Endothelial cell of umbilical vein (primary cell): ENCODE measurements at regions of chr4 and their contacts with region 1.

Region 1: GRCh38 chr4:165096776-165097175 is 15.9 kb downstream of the TMEM192 start:
- DNase-seq: peak; percentile 20
- H3K4me3 ChIP-seq: no peak overlapping the region
- H3K27ac ChIP-seq: no peak overlapping the region
- H3K4me1 ChIP-seq: no peaks in the 10 kb centered on the region
- H3K27me3 ChIP-seq: no peaks in the 10 kb centered on the region
- CTCF ChIP-seq: peak; percentile 28 to 37
- POLR2A ChIP-seq: no peak

Region 2: GRCh38 chr4:164779811-164780216 is 317.0 kb before region 1 on chr4:
- CTCF ChIA-PET with region 1: interaction called, 17 read pairs
- POLR2A ChIA-PET with region 1: no interaction called
- dilution Hi-C with region 1: no loop called
- intact Hi-C with region 1: loop called (anchors 1 kb)
- DNase-seq: peak; percentile 26
- H3K4me3 ChIP-seq: no peak overlapping the region
- H3K27ac ChIP-seq: no peak overlapping the region
- H3K4me1 ChIP-seq: no peaks in the 10 kb centered on the region
- H3K27me3 ChIP-seq: no peaks in the 10 kb centered on the region
- CTCF ChIP-seq: peak; percentile 58 to 78
- POLR2A ChIP-seq: no peak

Region 3: GRCh38 chr4:165085946-165086345 is 10.8 kb before region 1 on chr4:
- CTCF ChIA-PET with region 1: interaction called, 15 read pairs
- POLR2A ChIA-PET with region 1: no interaction called
- dilution Hi-C with region 1: no loop called
- intact Hi-C with region 1: no loop called
- DNase-seq: no peak
- H3K4me3 ChIP-seq: no peak overlapping the region
- H3K27ac ChIP-seq: no peak overlapping the region
- H3K4me1 ChIP-seq: no peaks in the 10 kb centered on the region
- H3K27me3 ChIP-seq: no peaks in the 10 kb centered on the region
- CTCF ChIP-seq: no peak
- POLR2A ChIP-seq: no peak

Region 4: GRCh38 chr4:165921546-165921945 is 824.8 kb after region 1 on chr4:
- CTCF ChIA-PET with region 1: no interaction called
- POLR2A ChIA-PET with region 1: no interaction called
- dilution Hi-C with region 1: no loop called
- intact Hi-C with region 1: no loop called
- DNase-seq: no peak
- H3K4me3 ChIP-seq: no peak overlapping the region
- H3K27ac ChIP-seq: no peak overlapping the region
- H3K4me1 ChIP-seq: peaks cover 9% of the 10 kb centered on the region
- H3K27me3 ChIP-seq: no peaks in the 10 kb centered on the region
- CTCF ChIP-seq: no peak
- POLR2A ChIP-seq: no peak